ENCODE measurements at regions of chr19 and their contacts with region 1.

Region 1: GRCh38 chr19:15125232-15126067 is 18.2 kb downstream of the SYDE1 start:
- DNase-seq: peak; percentile 99
- ATAC-seq: peak; percentile 91
- H3K4me3 Mint-ChIP-seq: peak overlapping the region; percentile 87
- H3K27ac Mint-ChIP-seq: peak overlapping the region; percentile 96
- H3K4me1 Mint-ChIP-seq: peaks cover 32% of the 10 kb centered on the region
- H3K27me3 Mint-ChIP-seq: no peaks in the 10 kb centered on the region

Region 2: DNA sequence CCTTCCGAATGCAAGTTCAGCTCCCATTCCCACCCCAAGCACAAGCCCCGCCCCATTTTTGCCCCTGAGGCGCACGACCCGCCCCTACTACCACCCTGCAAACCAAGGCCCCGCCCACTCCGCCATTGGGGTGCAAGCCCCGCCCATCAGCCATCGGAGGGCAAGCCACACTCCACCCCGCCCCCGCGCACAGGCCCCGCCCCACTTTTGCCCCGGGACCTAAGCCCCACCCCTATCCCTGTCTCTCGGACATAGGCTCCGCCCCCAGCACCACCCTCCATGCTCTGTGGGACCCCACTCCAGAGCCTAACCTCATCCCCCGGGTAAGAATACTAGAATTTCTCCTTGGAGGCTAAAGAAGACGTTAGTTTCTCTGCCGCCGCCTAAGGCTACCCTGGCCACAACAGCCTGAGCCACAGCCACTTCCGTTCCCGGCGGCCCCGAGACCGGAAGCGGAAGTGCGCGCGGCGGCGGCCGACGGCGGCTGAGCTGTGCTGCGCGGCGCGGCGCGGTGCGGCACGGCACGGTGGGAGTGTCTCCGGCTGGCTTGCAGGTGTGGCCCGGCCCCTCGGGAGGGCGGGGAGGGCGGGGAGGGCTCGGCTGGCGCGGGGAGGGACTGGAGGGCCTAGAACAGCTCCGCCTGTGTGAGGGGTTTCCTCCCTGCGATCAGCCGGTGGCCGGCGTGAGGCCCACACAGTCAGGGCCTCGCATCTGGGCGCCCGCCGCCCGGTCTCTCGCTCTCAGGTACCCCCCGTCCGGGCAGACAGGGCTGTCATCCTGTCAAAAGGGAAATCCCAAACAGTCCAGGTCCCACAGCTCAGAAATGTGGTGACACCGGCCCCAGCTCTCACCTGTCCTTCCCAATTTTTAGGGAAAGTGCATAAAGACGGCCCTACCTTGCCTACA is 435.6 kb before region 1 on chr19 and contains the start of gene ZNF333:
- CTCF ChIA-PET with region 1: no interaction called
- POLR2A ChIA-PET with region 1: no interaction called
- intact Hi-C with region 1: loop called in 1 of 2 experiments (anchors 1 kb)
- DNase-seq: peak; percentile 100
- ATAC-seq: peak; percentile 94
- H3K4me3 Mint-ChIP-seq: peak within 1 kb of the TSS; percentile 79
- H3K27ac Mint-ChIP-seq: peak within 1 kb of the TSS; percentile 95
- H3K4me1 Mint-ChIP-seq: peaks cover 17% of the 10 kb centered on the region
- H3K27me3 Mint-ChIP-seq: no peaks in the 10 kb centered on the region
- total RNA-seq, gene ZNF333: 11.7 to 12.7 TPM

Region 3: DNA sequence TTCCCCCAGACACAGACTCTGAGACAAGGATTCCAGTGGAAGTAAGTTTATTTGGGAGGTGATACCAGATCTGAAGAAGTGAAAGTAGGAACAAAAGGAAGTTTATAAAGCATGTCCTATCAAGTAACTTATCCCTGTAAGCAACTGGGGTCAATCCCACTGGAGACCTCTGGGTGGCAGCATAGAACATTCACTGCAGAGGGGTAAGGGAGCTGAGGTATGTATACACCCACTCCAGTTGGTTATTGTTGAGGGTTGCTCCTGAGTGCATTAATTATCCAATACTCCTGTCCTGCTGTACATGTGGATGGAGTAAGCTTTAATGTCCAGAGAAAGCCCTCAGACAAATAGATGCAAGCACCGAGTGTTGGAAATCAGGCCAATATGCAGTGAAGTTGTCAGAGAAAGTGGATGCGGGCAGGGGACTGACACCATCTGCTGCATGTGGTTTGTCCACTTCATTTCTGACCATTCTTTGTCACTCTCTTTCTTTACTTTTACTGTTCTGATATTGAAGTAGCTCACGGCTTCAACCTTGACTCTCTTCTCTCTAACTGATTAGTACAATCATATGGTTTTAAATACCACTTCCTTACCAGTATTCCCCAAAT is 28.7 kb after region 1 on chr19:
- CTCF ChIA-PET with region 1: interaction called, 5 read pairs
- POLR2A ChIA-PET with region 1: interaction called, 3 read pairs
- intact Hi-C with region 1: loop called in 1 of 2 experiments (anchors 1 kb)
- DNase-seq: peak; percentile 70
- ATAC-seq: peak; percentile 64
- H3K4me3 Mint-ChIP-seq: no peak overlapping the region
- H3K27ac Mint-ChIP-seq: no peak overlapping the region
- H3K4me1 Mint-ChIP-seq: peaks cover 5% of the 10 kb centered on the region
- H3K27me3 Mint-ChIP-seq: peaks cover 3% of the 10 kb centered on the region

Region 4: GRCh38 chr19:15379083-15379995 is 253.9 kb after region 1 on chr19 and contains the start of gene AKAP8:
- CTCF ChIA-PET with region 1: interaction called, 3 read pairs
- POLR2A ChIA-PET with region 1: no interaction called
- intact Hi-C with region 1: loop called in 1 of 2 experiments (anchors 1 kb)
- DNase-seq: peak; percentile 99
- ATAC-seq: peak; percentile 91
- H3K4me3 Mint-ChIP-seq: peak within 1 kb of the TSS; percentile 88
- H3K27ac Mint-ChIP-seq: peak within 1 kb of the TSS; percentile 100
- H3K4me1 Mint-ChIP-seq: peaks cover 37% of the 10 kb centered on the region
- H3K27me3 Mint-ChIP-seq: no peaks in the 10 kb centered on the region
- total RNA-seq, gene AKAP8: 47.9 to 54.3 TPM

Region 5: DNA sequence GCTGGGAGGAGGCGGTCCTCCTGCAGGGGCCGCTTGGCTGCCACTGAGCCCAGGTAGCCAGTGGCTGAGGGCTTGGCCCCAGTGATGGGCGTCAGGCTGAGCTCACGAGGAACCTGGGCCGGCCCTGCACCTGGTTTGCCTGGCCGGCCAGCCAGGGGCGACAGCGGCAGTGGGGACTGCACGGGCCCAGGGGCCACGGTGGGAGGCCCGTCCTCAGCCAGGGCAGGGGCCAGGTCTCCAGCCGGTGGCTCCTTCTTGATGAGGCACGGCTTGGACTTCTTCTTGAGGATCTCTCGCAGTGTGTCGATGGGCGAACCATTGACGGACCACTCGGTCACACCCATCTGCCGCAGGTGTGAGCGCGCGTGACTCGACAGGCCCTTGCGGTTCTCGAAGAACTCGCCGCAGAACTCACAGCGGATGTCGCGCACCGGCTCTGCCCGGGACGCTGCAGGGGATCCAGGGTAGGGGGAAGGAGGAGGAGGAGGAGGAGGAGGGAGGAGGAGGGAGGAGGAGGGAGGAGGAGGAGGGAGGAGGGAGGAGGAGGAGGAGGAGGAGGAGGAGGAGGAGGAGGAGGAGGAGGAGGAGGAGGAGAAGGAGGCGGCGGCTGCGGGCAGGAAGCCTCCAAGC is 300.0 kb after region 1 on chr19:
- CTCF ChIA-PET with region 1: no interaction called
- POLR2A ChIA-PET with region 1: no interaction called
- intact Hi-C with region 1: no loop called
- DNase-seq: no peak
- ATAC-seq: no peak
- H3K4me3 Mint-ChIP-seq: no peak overlapping the region
- H3K27ac Mint-ChIP-seq: no peak overlapping the region
- H3K4me1 Mint-ChIP-seq: peaks cover 3% of the 10 kb centered on the region
- H3K27me3 Mint-ChIP-seq: no peaks in the 10 kb centered on the region

Region 6: GRCh38 chr19:15555759-15556633 is 430.5 kb after region 1 on chr19:
- CTCF ChIA-PET with region 1: no interaction called
- POLR2A ChIA-PET with region 1: no interaction called
- intact Hi-C with region 1: loop called in 1 of 2 experiments (anchors 1 kb)
- DNase-seq: peak; percentile 99
- ATAC-seq: peak; percentile 86
- H3K4me3 Mint-ChIP-seq: peak overlapping the region; percentile 73
- H3K27ac Mint-ChIP-seq: peak overlapping the region; percentile 85
- H3K4me1 Mint-ChIP-seq: peaks cover 18% of the 10 kb centered on the region
- H3K27me3 Mint-ChIP-seq: peaks cover 2% of the 10 kb centered on the region

Region 7: DNA sequence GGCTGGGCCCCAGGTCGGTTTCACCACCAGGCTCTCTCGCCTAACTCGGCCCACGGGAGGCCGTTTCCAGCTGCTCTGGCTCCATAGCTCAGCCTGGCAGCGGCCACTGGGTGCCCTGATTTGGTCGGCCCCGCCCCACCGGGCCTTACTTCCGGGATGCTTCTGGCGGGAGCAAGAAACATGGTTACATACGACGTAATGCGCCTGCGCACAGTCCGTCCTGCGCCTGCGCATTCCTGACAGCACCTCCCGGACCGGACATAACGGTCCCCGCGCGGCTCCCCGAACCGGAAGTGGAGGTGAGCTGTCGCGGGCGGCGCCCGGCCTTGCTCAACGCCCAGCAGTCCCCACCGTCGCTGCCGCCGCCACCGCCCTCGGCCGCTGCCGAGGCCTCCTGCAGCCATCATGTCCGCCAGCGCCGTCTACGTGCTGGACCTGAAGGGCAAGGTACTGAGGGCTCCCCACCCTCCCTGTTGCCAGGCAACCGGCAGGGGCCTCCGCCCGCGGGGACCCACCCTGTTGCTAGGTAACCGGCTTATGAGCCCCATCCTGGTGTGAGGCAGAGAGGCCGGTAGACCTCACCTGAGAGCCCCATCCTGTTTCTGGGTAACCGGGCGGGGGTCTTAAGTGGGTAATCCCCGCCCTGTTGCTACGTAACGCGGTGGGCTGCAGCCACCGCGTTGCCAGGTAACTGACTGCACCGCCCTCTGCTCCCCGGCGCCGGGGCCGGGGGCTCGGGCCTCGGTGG is 1072.3 kb after region 1 on chr19 and contains the start of gene AP1M1:
- CTCF ChIA-PET with region 1: no interaction called
- POLR2A ChIA-PET with region 1: no interaction called
- intact Hi-C with region 1: loop called in 1 of 2 experiments (anchors 1 kb)
- DNase-seq: peak; percentile 99
- ATAC-seq: peak; percentile 95
- H3K4me3 Mint-ChIP-seq: peak within 1 kb of the TSS; percentile 83
- H3K27ac Mint-ChIP-seq: peak within 1 kb of the TSS; percentile 96
- H3K4me1 Mint-ChIP-seq: peaks cover 33% of the 10 kb centered on the region
- H3K27me3 Mint-ChIP-seq: no peaks in the 10 kb centered on the region
- total RNA-seq, gene AP1M1: 61.8 to 92.0 TPM